ENCODE measurements at regions of chr1 and their contacts with region 1.

Region 1: GRCh38 chr1:168082008-168082876 is 54.5 kb downstream of the GPR161 start:
- DNase-seq: peak; percentile 63
- ATAC-seq: peak; percentile 86
- H3K4me3 ChIP-seq: no peak overlapping the region
- H3K4me3 Mint-ChIP-seq: no peak overlapping the region
- H3K27ac ChIP-seq: no peak overlapping the region
- H3K27ac Mint-ChIP-seq: no peak overlapping the region
- H3K4me1 ChIP-seq: peaks cover 0 to 5% of the 10 kb centered on the region in 2 donors
- H3K4me1 Mint-ChIP-seq: peaks cover 2% of the 10 kb centered on the region
- H3K27me3 ChIP-seq: no peaks in the 10 kb centered on the region
- H3K27me3 Mint-ChIP-seq: no peaks in the 10 kb centered on the region
- CTCF ChIP-seq: peak; percentile 86

Region 2: DNA sequence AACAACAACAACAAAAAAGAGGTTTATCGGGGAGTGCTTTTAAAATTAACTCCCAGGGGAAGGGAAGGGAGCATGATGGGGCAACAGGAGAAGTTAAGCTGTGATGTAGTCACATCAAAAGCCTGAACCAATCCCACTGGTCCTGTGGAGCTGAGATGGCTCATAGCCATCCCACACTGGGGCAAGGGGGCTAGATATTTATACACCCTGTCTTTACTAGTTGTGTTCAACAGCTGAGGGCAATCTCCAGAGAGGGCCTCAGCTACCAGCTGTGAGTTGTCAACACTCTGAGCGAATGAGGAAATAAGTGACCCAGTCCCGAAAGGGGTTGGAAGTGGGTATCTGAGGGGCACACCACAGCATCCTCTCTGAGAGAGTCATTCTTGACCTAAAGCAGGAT is 497.7 kb before region 1 on chr1:
- CTCF ChIA-PET with region 1: no interaction called
- POLR2A ChIA-PET with region 1: no interaction called
- intact Hi-C with region 1: no loop called
- DNase-seq: no peak
- ATAC-seq: no peak
- H3K4me3 ChIP-seq: no peak overlapping the region
- H3K4me3 Mint-ChIP-seq: no peak overlapping the region
- H3K27ac ChIP-seq: no peak overlapping the region
- H3K27ac Mint-ChIP-seq: no peak overlapping the region
- H3K4me1 ChIP-seq: peaks cover 0 to 7% of the 10 kb centered on the region in 2 donors
- H3K4me1 Mint-ChIP-seq: peaks cover 9% of the 10 kb centered on the region
- H3K27me3 ChIP-seq: peaks cover 0 to 2% (median 0%) of the 10 kb centered on the region in 4 experiments
- H3K27me3 Mint-ChIP-seq: no peaks in the 10 kb centered on the region
- CTCF ChIP-seq: no peak

Region 3: DNA sequence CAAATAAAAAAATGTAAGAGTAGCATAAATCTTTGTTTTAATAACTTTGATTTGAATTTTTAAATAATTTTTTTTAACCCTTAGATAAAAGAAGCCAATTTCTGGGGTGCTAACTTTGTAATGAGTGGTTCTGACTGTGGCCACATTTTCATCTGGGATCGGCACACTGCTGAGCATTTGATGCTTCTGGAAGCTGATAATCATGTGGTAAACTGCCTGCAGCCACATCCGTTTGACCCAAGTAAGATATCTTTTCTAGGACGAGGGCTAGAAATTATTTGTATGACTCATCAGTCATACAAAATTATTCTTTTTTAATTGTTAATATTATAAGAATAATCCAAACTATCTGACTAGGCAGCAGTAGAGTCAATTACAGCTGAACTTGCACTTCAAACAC is 16.7 kb before region 1 on chr1:
- CTCF ChIA-PET with region 1: interaction called, 18 read pairs
- POLR2A ChIA-PET with region 1: no interaction called
- intact Hi-C with region 1: no loop called
- DNase-seq: no peak
- ATAC-seq: no peak
- H3K4me3 ChIP-seq: no peak overlapping the region
- H3K4me3 Mint-ChIP-seq: no peak overlapping the region
- H3K27ac ChIP-seq: no peak overlapping the region
- H3K27ac Mint-ChIP-seq: no peak overlapping the region
- H3K4me1 ChIP-seq: no peaks in the 10 kb centered on the region
- H3K4me1 Mint-ChIP-seq: no peaks in the 10 kb centered on the region
- H3K27me3 ChIP-seq: no peaks in the 10 kb centered on the region
- H3K27me3 Mint-ChIP-seq: no peaks in the 10 kb centered on the region
- CTCF ChIP-seq: no peak

Region 4: DNA sequence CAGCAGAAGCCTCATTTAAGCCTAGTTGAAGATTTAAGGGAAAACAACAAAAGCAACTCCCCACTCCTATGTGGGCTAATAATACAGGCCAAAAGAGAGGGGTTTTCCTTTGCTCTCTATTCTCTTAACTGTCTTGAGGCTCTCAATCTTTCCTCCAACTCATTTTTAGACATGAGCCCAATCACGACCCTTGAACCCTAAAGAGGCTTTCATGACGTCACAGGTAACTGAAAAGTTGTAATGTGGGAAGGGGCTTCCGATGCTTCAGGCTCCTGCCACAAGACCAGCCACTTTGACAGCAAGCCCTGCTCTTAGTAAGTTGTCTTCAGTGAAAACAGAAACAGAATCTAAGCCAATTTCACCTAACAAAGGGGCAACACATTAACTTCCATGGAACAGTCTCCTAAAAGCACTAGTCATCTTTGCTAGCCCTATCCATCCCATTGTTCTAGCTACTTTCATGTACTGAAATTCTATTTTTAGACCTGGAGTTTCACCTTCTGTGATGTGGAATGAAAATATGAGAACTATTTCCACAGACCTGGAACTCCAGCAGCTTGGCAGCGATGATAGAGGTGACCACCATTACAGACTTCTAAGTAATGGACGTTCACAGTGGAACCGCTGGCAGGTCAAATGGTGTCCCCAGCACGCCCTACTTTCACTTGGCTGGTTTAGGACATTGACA is 18.2 kb after region 1 on chr1:
- CTCF ChIA-PET with region 1: interaction called, 11 read pairs
- POLR2A ChIA-PET with region 1: no interaction called
- intact Hi-C with region 1: no loop called
- DNase-seq: no peak
- ATAC-seq: no peak
- H3K4me3 ChIP-seq: no peak overlapping the region
- H3K4me3 Mint-ChIP-seq: no peak overlapping the region
- H3K27ac ChIP-seq: no peak overlapping the region
- H3K27ac Mint-ChIP-seq: no peak overlapping the region
- H3K4me1 ChIP-seq: no peaks in the 10 kb centered on the region
- H3K4me1 Mint-ChIP-seq: no peaks in the 10 kb centered on the region
- H3K27me3 ChIP-seq: peaks cover 0 to 5% (median 2%) of the 10 kb centered on the region in 4 experiments
- H3K27me3 Mint-ChIP-seq: peaks cover 4% of the 10 kb centered on the region
- CTCF ChIP-seq: no peak

Region 5: GRCh38 chr1:168145184-168146159 is 63.2 kb after region 1 on chr1:
- CTCF ChIA-PET with region 1: interaction called, 10 read pairs
- POLR2A ChIA-PET with region 1: no interaction called
- intact Hi-C with region 1: no loop called
- DNase-seq: peak; percentile 89
- ATAC-seq: peak; percentile 100
- H3K4me3 ChIP-seq: peak overlapping the region in 1 of 5 experiments; percentile 7
- H3K4me3 Mint-ChIP-seq: peak overlapping the region; percentile 59
- H3K27ac ChIP-seq: peak overlapping the region; percentile 35 to 66
- H3K27ac Mint-ChIP-seq: peak overlapping the region; percentile 56
- H3K4me1 ChIP-seq: peaks cover 10 to 13% of the 10 kb centered on the region in 2 donors
- H3K4me1 Mint-ChIP-seq: peaks cover 14% of the 10 kb centered on the region
- H3K27me3 ChIP-seq: no peaks in the 10 kb centered on the region
- H3K27me3 Mint-ChIP-seq: no peaks in the 10 kb centered on the region
- CTCF ChIP-seq: peak; percentile 89

Measured in B cell (primary cell).